ENCODE measurements at regions of chr3 and their contacts with region 1.

Region 1: DNA sequence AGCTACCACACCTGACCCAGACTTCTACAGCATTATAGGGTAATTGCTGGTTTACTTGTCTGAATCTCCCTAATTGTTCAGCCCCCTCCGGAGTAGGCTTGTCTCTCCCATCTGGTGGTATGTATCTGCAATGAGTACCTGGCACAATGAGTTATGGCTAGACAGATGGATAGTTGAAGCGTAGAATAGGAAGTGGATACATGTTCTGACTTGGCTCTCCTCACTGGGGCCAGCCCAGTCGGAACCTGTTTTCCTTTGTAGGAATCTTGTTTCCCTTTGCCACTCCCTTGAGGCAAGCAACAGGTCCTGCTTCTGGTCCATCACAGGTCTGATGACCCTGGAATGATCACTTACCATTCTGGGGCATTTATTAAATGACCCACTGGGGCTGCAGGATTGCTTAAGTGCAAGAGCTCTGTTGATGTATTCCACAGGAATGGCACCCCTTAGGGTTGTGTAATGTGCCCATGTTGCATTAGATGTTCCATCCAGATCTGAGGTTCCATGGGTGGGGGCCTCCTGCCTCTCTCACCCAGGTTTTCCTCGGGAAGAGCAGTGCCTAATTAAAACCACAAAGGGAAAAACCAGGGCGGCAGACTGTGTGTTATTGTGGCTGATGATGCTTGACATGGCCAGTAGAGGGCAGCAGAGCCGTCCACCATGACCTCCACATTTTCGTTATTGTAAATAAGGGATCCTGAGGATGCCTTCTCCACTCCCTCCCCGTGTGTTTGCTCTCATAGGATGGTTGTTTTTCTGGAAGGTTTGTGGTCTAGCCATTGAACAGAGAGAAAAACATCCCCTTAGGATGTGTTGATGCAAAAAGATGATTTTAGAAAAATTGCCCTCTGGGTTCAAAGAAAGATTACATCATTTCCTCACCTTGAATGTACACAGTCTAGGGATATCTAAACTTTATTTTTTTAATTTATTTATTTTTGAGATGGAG is 58.0 kb downstream of the CMTM8 start:
- DNase-seq: peak; percentile 43
- ATAC-seq: peak; percentile 91
- H3K4me3 ChIP-seq: peak overlapping the region in 1 of 2 experiments; percentile 14; a peak in 1 of 4 replicates
- H3K27ac ChIP-seq: no peak overlapping the region
- H3K4me1 ChIP-seq: no peaks in the 10 kb centered on the region; the same call in 1 of the 2 replicates
- H3K27me3 ChIP-seq: no peaks in the 10 kb centered on the region
- CTCF ChIP-seq: peak; percentile 90

Region 2: DNA sequence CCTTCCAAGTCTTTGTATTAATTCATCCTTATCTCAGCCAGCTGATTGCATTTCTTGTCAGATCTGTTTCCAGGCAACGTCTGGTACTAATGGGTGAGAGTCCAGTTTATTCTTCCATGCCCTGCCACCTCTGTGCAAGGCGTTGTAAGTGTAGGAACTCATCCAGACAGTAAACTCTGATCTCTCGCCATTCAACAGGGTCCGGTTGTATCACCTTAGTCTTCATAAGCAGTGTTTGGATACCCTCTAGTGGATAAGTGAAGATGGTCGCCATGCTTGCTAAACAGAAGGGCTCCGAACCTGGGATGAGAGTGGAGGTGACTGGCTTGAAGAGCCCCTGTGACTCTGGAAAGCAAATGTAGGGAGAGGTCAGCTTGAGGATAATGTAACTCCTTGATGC is 43.5 kb after region 1 on chr3:
- CTCF ChIA-PET with region 1: interaction called, 3 read pairs
- POLR2A ChIA-PET with region 1: no interaction called
- in situ Hi-C with region 1: no loop called
- intact Hi-C with region 1: loop called (anchors 5 kb)
- DNase-seq: peak; percentile 17
- ATAC-seq: peak; percentile 88
- H3K4me3 ChIP-seq: no peak overlapping the region
- H3K27ac ChIP-seq: no peak overlapping the region
- H3K4me1 ChIP-seq: no peaks in the 10 kb centered on the region
- H3K27me3 ChIP-seq: no peaks in the 10 kb centered on the region
- CTCF ChIP-seq: peak; percentile 60

Region 3: DNA sequence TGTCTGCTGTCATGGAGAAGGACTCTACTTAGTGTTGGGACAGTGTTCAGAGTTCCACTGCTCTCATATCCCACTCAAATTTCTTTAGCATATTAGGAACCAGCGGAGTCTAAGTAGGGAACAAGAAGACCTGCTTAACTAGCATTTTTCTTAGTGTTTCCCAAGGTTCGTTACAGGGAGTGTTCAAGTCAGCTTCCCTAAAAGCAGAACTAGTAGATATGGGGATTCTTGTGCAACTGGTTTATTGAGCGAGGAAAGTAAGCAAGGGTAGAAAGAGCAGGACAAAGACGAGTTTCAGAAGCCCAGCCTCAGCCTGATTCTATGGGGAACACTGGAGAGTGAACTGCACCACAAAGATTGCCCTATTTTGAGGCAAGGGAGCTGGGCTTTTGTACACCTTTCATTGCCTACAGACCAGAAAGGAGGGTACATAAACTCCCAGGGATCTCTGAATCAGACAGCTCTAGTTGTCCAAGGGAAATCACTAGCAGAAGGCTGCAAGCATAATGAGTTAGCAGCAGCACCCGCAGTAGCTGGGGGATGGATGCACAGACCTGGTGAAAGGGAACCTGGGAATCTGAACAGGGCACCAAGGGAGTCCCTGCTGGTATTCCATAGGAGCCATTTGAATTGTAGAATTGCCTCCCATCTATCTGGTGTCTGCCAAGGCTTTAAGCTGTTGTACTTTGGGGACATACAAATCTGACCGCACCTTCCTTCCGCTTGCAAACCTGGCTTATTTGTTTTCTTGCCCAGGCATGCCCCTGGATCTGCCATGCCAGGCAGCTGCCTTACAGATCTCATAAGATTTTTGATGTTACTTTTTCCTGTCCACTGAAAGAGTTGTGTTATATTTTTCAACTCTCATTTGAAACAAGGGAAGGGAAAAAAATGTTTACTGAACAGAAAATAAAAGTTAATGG is 110.2 kb after region 1 on chr3:
- CTCF ChIA-PET with region 1: no interaction called
- POLR2A ChIA-PET with region 1: no interaction called
- in situ Hi-C with region 1: no loop called
- intact Hi-C with region 1: no loop called
- DNase-seq: no peak
- ATAC-seq: no peak
- H3K4me3 ChIP-seq: no peak overlapping the region
- H3K27ac ChIP-seq: 0 out of 2 replicates have a peak overlapping the region, but pooled peaks have one; percentile 7
- H3K4me1 ChIP-seq: peaks cover 23% of the 10 kb centered on the region
- H3K27me3 ChIP-seq: no peaks in the 10 kb centered on the region
- CTCF ChIP-seq: no peak

Region 4: DNA sequence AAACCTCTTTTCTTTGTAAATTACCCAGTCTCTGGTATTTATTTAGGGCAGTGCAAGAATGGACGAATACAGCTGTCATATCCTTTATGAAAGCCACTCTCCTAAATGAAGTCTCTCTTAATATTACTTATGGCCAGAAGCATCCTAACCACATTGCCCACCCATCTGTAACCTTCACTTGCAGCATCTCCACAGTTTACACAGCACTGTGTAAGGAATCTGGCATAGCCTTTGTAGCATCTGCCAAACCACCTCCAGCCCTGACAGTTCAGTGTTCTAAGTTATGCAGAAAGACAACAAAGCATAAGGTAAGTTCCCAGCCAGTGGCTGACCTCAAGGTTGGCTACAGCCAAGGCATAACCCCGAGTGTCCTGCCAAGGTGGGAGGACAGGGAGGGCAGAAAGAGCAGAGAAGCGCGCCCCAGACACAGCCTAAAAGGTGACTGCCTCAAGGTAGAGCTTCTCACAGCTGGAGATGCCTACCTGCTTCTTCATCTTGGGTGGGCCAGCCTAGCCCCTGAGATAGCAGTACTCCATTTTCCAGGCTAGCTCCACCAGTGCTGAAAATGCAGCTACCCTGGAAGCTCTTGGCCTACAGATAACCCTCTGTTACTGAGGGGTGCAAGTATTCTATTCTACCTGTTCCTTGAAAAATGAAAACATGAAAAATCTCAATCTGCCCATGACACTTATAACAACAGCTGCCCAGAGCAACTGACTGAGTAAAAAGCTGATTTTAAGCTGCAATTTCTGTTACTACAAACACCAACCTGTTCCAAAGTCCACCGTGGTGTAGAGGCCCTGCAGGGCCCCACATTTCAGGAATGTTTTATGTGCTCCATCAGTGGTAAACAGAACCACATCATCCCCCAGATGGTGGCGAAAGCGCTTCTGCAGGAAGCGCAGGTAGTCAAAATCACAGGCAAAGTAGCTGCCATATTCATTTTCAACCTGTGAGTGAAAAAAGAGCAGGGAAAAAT is 761.1 kb after region 1 on chr3:
- CTCF ChIA-PET with region 1: no interaction called
- POLR2A ChIA-PET with region 1: interaction called, 12 read pairs
- in situ Hi-C with region 1: no loop called
- intact Hi-C with region 1: no loop called
- DNase-seq: no peak
- ATAC-seq: no peak
- H3K4me3 ChIP-seq: no peak overlapping the region
- H3K27ac ChIP-seq: no peak overlapping the region
- H3K4me1 ChIP-seq: no peaks in the 10 kb centered on the region
- H3K27me3 ChIP-seq: no peaks in the 10 kb centered on the region
- CTCF ChIP-seq: no peak